GM18951 (cell line): ENCODE measurements at regions of chr1 and their contacts with region 1.

Region 1: GRCh38 chr1:43073490-43074230 is 98.4 kb downstream of the EBNA1BP2 start:
- POLR2A ChIP-seq: no peak

Region 2: DNA sequence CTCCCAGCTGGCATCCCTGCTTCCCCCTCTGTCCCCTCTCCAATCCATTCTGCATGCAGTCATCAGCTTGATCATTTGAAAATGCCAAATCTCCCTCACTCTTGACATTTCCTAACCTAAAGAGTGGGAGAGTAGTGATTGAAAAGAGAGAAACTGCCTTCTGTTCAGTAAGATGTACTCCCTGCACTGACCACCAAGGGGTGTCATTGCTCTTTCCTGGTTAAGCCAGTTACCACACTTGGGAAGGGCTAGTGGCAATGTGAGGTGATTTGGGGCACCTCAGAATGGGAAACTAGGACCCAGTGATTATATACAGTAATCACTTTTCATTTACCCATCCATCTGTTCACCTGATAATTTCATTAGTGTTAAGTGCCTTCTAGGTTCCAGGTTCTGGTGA is 295.8 kb before region 1 on chr1:
- in situ Hi-C with region 1: loop called (anchors 10 kb)
- POLR2A ChIP-seq: no peak

Region 3: GRCh38 chr1:42913426-42914091 is 160.1 kb before region 1 on chr1:
- in situ Hi-C with region 1: loop called (anchors 5 kb)
- POLR2A ChIP-seq: no peak

Region 4: GRCh38 chr1:43207229-43207861 is 133.7 kb after region 1 on chr1:
- in situ Hi-C with region 1: no loop called
- POLR2A ChIP-seq: no peak

Region 5: DNA sequence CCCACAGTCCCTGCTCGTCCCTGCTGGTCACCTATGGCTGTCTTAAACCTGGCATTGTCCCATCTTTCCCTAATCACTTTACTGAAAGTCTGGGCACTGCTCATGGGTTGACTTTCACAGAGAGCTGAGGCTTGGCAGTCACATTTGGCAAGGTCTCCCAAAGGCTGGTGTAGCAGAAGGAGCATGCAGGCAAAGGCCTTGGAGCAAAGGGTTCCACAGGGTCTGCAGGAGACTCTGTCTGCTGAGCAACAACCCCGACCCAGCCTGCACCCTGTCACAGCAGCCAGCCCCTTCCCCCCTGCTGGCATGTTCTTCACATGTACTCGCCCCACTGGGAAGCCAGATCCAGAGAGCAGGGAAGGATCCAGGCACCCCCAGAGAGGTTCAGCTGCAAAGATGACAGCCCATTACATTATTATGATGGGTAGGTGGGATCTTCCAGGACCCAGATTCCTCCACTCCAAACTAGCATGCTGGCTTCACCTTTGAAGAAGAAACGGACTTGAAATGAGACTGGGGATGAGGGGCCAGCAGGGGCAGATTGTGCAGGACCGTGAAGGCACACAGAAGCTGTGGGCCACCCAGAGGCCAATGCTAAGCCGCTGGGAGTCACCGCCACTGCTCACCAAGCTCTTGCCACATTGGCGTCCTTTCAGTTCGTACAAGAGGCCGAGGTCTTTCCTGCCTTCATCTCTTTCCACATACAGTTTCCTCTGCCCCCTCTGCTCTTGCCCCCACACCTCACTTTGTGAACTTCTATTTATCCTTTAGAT is 182.0 kb after region 1 on chr1:
- in situ Hi-C with region 1: no loop called
- POLR2A ChIP-seq: no peak

Region 6: GRCh38 chr1:43285269-43285990 is 211.8 kb after region 1 on chr1 and contains the start of gene C1orf210:
- in situ Hi-C with region 1: no loop called
- POLR2A ChIP-seq: no peak